ENCODE measurements at regions of chr1 and their contacts with region 1.

Region 1: DNA sequence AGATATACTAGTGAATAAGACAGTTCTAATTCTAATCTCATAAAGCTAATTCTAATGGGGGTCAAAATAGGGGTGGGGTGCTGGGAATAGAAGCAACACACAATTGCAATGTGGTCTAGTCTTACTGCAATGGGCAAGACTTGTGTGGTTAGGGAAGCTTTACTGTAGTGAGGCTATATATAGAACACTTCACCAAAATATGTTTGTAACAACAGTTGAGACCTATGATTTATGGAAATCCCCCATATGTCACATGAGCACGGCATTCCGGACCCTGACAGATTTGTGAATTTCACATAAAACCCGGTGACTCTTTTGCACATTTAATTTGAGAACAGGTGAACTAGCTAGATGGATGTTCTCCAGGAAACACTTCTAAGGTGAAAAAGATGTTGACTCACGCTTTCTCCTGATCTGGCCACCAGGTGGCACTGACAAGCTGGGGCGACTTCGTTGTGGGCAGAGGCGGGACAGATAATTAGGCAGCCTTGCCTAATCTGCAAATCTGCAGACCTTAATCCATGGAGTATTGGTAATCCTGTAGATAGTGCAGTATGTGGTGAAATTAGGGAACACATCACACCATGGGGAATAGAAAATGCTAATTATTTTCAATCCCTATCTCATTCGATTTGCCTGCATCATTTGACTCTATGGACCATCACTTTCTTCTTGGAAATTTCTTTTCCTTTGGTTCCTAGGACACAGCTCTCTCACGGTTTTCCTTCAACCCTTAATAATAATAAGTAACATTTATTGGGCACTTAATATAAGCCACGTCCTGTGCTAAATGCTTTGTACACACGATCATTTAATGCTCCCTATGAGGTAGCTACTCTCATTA is 37.7 kb downstream of the KIAA0040 start:
- DNase-seq: peak in 9 of 10 donors; percentile 44 to 70 (median 61)
- H3K4me3 ChIP-seq: no peak overlapping the region
- H3K27ac ChIP-seq: no peak overlapping the region
- H3K27me3 ChIP-seq: peaks cover 0 to 7% (median 0%) of the 10 kb centered on the region in 45 donors
- CTCF ChIP-seq: peak; percentile 76 to 97 (median 91)

Region 2: DNA sequence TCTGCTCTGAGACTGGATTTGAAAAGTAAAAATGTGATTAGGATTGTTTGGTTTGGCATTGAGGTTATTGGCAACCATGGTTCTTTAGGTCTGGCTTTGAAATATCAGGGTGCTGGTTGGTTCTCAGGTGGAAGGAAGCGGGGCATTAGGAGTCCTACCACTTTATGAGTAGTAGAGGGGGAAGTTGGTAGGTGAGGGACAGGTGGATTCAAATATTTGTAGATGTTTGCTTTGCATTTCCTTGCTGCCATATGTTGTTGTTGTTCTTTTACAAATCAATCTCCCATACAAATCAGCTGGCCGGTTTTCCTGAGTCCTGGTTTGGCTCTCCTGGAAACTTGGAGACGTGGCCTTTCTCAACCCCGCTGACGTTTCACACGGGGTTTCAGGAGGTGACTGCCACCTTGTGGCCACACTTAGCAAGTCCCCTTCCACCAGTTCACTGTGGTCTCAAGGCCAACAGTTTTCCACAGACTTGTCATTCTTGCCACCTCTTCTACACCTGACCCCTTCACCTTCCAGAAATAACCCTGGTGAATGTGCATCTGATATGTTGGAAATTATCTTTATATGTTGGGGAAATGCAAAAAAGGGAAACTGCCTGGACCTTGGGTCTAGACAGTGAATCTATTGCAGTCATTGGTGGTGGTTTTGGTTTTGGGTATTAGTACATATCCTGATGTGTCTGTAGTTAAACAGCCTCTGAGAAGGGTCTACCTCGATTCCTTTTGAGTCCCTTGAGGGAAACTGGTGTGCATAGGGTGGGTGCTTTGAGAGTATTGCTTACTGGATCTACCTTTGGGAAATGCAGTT is 164.8 kb after region 1 on chr1:
- intact Hi-C with region 1: loop called (anchors 2 to 5 kb)
- DNase-seq: peak in 9 of 10 donors; percentile 33 to 74 (median 63)
- H3K4me3 ChIP-seq: no peak overlapping the region
- H3K27ac ChIP-seq: peak overlapping the region in 1 of 59 donors; percentile 30
- H3K27me3 ChIP-seq: peaks cover 0 to 4% (median 0%) of the 10 kb centered on the region in 45 donors
- CTCF ChIP-seq: peak; percentile 65 to 93 (median 85)

Region 3: DNA sequence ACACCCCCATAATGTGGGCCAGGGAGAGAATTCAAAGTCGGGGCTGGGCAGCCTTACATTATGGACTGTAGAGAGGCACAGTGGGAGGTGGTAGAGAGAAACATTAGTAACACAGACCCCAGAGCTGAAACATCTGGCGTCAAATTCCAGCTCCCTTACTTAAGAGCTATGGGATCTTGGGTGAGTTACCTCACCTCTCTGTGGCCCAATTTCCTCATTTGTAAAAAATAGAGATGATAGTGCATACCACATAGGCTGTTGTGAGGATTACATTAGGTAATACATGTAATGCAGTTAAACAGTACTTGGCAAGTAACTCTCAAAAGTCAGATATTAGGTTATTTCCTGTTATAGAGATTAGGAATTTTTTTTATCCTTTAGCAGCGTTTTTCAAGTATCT is 198.2 kb after region 1 on chr1:
- intact Hi-C with region 1: no loop called
- DNase-seq: no peak
- H3K4me3 ChIP-seq: no peak overlapping the region
- H3K27ac ChIP-seq: no peak overlapping the region
- H3K27me3 ChIP-seq: peaks cover 0 to 6% (median 0%) of the 10 kb centered on the region in 45 donors
- CTCF ChIP-seq: no peak

Region 4: GRCh38 chr1:175419744-175420546 is 265.1 kb after region 1 on chr1:
- intact Hi-C with region 1: no loop called
- DNase-seq: no peak
- H3K4me3 ChIP-seq: no peak overlapping the region
- H3K27ac ChIP-seq: no peak overlapping the region
- H3K27me3 ChIP-seq: peaks cover 0 to 15% (median 0%) of the 10 kb centered on the region in 45 donors
- CTCF ChIP-seq: no peak

Region 5: GRCh38 chr1:176073524-176074157 is 918.8 kb after region 1 on chr1:
- intact Hi-C with region 1: loop called in 1 of 2 experiments (anchors 5 kb)
- DNase-seq: peak in 3 of 10 donors; percentile 6 to 54 (median 44)
- H3K4me3 ChIP-seq: no peak overlapping the region
- H3K27ac ChIP-seq: no peak overlapping the region
- H3K27me3 ChIP-seq: no peaks in the 10 kb centered on the region
- CTCF ChIP-seq: peak; percentile 57 to 95 (median 83)

Region 6: GRCh38 chr1:176843352-176844297 is 1688.8 kb after region 1 on chr1:
- intact Hi-C with region 1: loop called in 1 of 2 experiments (anchors 10 kb)
- DNase-seq: peak in 1 of 10 donors; percentile 27
- H3K4me3 ChIP-seq: no peak overlapping the region
- H3K27ac ChIP-seq: no peak overlapping the region
- H3K27me3 ChIP-seq: no peaks in the 10 kb centered on the region
- CTCF ChIP-seq: peak; percentile 36 to 87 (median 66)